GM12878 (cell line): ENCODE measurements at regions of chr1 and their contacts with region 1.

Region 1: DNA sequence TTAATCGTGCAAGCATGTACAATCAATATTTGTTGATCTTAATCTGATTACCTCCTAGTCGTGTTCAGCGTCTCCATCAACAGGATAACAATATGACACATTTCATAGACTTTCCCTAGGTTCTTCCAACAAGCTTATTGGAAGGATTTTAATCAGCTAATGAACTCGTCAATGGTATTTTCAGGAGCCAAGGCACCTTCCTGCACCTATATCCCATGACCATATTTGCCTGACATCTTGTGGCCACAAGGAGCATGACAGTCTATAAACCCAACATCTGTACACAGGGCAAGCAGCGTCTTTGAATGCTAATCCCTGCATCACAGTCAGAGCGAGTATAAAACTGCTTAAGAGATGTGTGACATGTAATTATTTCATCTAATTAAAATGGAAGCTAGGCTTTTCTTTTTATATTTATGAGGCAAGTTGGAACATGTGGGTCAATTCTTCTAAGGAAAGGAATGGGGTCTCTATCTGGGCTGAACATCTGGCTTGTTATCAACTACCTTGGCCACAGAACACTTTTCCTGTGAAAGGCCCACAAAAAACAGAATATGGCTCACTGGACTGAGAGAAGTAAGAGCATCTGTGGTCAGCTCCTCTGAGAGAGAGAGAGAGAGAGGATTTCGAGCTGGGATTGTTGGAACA is 388.8 kb downstream of the NTNG1 start:
- DNase-seq: peak; percentile 19
- ATAC-seq: peak; percentile 98
- H3K4me3 ChIP-seq: no peak overlapping the region
- H3K27ac ChIP-seq: no peak overlapping the region
- H3K4me1 ChIP-seq: no peaks in the 10 kb centered on the region
- H3K27me3 ChIP-seq: no peaks in the 10 kb centered on the region
- CTCF ChIP-seq: peak; percentile 85 to 95 (median 88); a peak in 5 of 6 replicates
- EP300 ChIP-seq: no peak
- POLR2A ChIP-seq: no peak
- RAD21 ChIP-seq: peak; percentile 98

Region 2: DNA sequence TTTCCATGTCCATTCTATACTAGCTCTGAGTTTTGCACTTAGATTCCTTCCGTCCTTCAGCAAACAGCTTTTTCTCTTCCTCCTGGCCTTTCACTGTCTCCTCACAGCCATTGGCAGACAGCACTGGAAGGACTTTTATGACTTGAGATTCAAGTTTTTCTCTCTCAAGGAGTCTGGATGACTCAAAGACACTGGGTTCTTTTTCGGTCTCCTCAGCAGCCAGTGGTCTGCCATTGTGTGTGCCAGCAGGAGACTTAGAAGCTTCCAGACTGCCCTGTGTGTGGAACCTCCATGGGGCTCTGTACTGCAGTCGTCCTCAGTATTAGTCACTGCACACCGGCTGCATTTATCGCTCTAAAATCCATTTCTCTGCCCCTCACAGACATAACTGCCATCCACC is 358.3 kb before region 1 on chr1:
- CTCF ChIA-PET with region 1: interaction called, 13 read pairs
- POLR2A ChIA-PET with region 1: no interaction called
- RAD21 ChIA-PET with region 1: interaction called, 3 read pairs
- SMC1A ChIA-PET with region 1: no interaction called
- in situ Hi-C with region 1: no loop called
- intact Hi-C with region 1: no loop called
- DNase-seq: no peak
- ATAC-seq: no peak
- H3K4me3 ChIP-seq: no peak overlapping the region
- H3K27ac ChIP-seq: no peak overlapping the region
- H3K4me1 ChIP-seq: no peaks in the 10 kb centered on the region
- H3K27me3 ChIP-seq: no peaks in the 10 kb centered on the region
- CTCF ChIP-seq: no peak
- EP300 ChIP-seq: no peak
- POLR2A ChIP-seq: no peak
- RAD21 ChIP-seq: no peak

Region 3: DNA sequence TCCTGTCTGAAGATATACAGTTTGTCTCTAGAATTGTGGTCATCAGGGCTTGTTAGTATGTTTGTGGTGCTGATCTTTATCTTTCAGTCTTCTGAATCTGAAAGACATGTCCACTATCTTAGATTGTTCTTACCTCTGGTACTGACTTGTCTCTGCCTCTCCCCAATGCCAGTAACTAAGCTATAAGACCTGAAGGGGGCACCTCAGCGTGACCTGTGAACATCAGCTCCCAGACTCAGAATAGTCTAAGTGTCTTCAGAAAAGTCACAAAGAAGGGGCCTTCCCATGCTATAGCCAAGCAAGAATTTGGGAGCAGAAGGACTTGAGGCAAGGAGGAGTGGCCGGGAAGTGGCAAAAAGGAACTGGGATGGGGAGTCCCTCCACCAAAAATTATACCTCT is 210.7 kb before region 1 on chr1:
- CTCF ChIA-PET with region 1: interaction called, 25 read pairs
- POLR2A ChIA-PET with region 1: no interaction called
- RAD21 ChIA-PET with region 1: interaction called, 4 read pairs
- SMC1A ChIA-PET with region 1: interaction called, 4 read pairs
- in situ Hi-C with region 1: no loop called
- intact Hi-C with region 1: no loop called
- DNase-seq: no peak
- ATAC-seq: peak; percentile 57; the same call in 2 of the 3 replicates
- H3K4me3 ChIP-seq: no peak overlapping the region
- H3K27ac ChIP-seq: no peak overlapping the region
- H3K4me1 ChIP-seq: no peaks in the 10 kb centered on the region
- H3K27me3 ChIP-seq: no peaks in the 10 kb centered on the region
- CTCF ChIP-seq: peak in 2 of 3 experiments; percentile 15 to 18; a peak in 1 of 6 replicates
- EP300 ChIP-seq: no peak
- POLR2A ChIP-seq: no peak
- RAD21 ChIP-seq: no peak

Region 4: GRCh38 chr1:107430540-107431228 is 98.9 kb before region 1 on chr1:
- CTCF ChIA-PET with region 1: interaction called, 314 read pairs
- POLR2A ChIA-PET with region 1: interaction called, 7 read pairs
- RAD21 ChIA-PET with region 1: interaction called, 178 read pairs
- SMC1A ChIA-PET with region 1: interaction called, 156 read pairs
- in situ Hi-C with region 1: loop called (anchors 10 kb)
- intact Hi-C with region 1: loop called (anchors 1 kb)
- DNase-seq: peak; percentile 39
- ATAC-seq: peak; percentile 95
- H3K4me3 ChIP-seq: no peak overlapping the region
- H3K27ac ChIP-seq: no peak overlapping the region
- H3K4me1 ChIP-seq: peaks cover 6% of the 10 kb centered on the region; the same call in 1 of the 2 replicates
- H3K27me3 ChIP-seq: no peaks in the 10 kb centered on the region
- CTCF ChIP-seq: peak; percentile 71 to 86 (median 74)
- EP300 ChIP-seq: no peak
- POLR2A ChIP-seq: no peak
- RAD21 ChIP-seq: peak; percentile 92

Region 5: DNA sequence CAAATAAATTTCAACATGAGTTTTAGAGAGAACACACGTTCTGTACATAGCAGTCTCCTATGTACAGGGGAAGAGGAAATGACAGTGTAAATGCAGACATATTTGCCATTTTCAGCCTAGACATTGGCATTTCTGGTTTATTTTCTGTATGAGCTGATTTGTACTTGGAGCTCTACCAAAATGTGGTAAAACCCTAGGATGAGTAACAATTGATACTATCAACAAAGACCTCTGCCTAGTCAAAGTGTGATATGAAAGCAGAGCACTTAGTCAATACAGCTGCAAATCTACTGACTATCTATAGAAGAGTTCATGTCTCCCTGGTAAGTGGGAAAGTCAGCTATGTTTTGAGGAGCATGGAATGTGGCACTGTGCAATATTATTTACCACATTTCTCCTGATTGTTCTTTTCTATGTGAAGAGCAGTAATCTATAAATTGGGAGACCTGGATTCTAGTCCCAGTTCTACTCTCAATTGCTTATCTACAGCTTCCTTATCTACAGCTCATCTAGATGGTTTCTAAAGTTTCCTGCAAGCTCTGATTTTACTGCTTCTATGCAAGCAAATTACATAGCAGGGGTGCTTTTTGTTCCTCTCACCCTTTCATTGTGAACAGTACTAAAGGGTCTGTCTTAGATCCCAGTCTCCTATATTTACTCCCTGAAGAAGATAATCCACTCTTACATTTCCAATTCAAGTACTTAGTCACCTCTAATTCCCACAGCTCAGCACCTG is 54.6 kb before region 1 on chr1:
- CTCF ChIA-PET with region 1: interaction called, 26 read pairs
- POLR2A ChIA-PET with region 1: no interaction called
- RAD21 ChIA-PET with region 1: interaction called, 11 read pairs
- SMC1A ChIA-PET with region 1: interaction called, 4 read pairs
- in situ Hi-C with region 1: no loop called
- intact Hi-C with region 1: no loop called
- DNase-seq: no peak
- ATAC-seq: peak; percentile 84
- H3K4me3 ChIP-seq: no peak overlapping the region
- H3K27ac ChIP-seq: no peak overlapping the region
- H3K4me1 ChIP-seq: peaks cover 5% of the 10 kb centered on the region; the same call in 1 of the 2 replicates
- H3K27me3 ChIP-seq: no peaks in the 10 kb centered on the region
- CTCF ChIP-seq: no peak
- EP300 ChIP-seq: no peak
- POLR2A ChIP-seq: no peak
- RAD21 ChIP-seq: no peak

Region 6: GRCh38 chr1:107515702-107516101 is 13.9 kb before region 1 on chr1:
- CTCF ChIA-PET with region 1: interaction called, 67 read pairs
- POLR2A ChIA-PET with region 1: no interaction called
- RAD21 ChIA-PET with region 1: interaction called, 7 read pairs
- SMC1A ChIA-PET with region 1: interaction called, 12 read pairs
- in situ Hi-C with region 1: no loop called
- intact Hi-C with region 1: no loop called
- DNase-seq: no peak
- ATAC-seq: peak; percentile 52
- H3K4me3 ChIP-seq: no peak overlapping the region
- H3K27ac ChIP-seq: no peak overlapping the region
- H3K4me1 ChIP-seq: no peaks in the 10 kb centered on the region
- H3K27me3 ChIP-seq: no peaks in the 10 kb centered on the region; a peak in 1 of 4 replicates
- CTCF ChIP-seq: peak in 2 of 3 experiments; percentile 32 to 35; a peak in 3 of 6 replicates
- EP300 ChIP-seq: no peak
- POLR2A ChIP-seq: no peak
- RAD21 ChIP-seq: peak; percentile 36

Region 7: GRCh38 chr1:107653005-107653404 is 123.4 kb after region 1 on chr1:
- CTCF ChIA-PET with region 1: no interaction called
- POLR2A ChIA-PET with region 1: no interaction called
- RAD21 ChIA-PET with region 1: no interaction called
- SMC1A ChIA-PET with region 1: no interaction called
- in situ Hi-C with region 1: no loop called
- intact Hi-C with region 1: no loop called
- DNase-seq: no peak
- ATAC-seq: no peak
- H3K4me3 ChIP-seq: no peak overlapping the region
- H3K27ac ChIP-seq: no peak overlapping the region
- H3K4me1 ChIP-seq: no peaks in the 10 kb centered on the region
- H3K27me3 ChIP-seq: no peaks in the 10 kb centered on the region
- CTCF ChIP-seq: no peak
- EP300 ChIP-seq: no peak
- POLR2A ChIP-seq: no peak
- RAD21 ChIP-seq: no peak

Region 8: GRCh38 chr1:108017698-108018097 is 488.1 kb after region 1 on chr1:
- CTCF ChIA-PET with region 1: no interaction called
- POLR2A ChIA-PET with region 1: no interaction called
- RAD21 ChIA-PET with region 1: no interaction called
- SMC1A ChIA-PET with region 1: no interaction called
- in situ Hi-C with region 1: no loop called
- intact Hi-C with region 1: no loop called
- DNase-seq: no peak
- ATAC-seq: no peak
- H3K4me3 ChIP-seq: no peak overlapping the region
- H3K27ac ChIP-seq: no peak overlapping the region
- H3K4me1 ChIP-seq: no peaks in the 10 kb centered on the region
- H3K27me3 ChIP-seq: no peaks in the 10 kb centered on the region
- CTCF ChIP-seq: no peak
- EP300 ChIP-seq: no peak
- POLR2A ChIP-seq: no peak
- RAD21 ChIP-seq: no peak